ENCODE measurements at regions of chr20 and their contacts with region 1.

Region 1: DNA sequence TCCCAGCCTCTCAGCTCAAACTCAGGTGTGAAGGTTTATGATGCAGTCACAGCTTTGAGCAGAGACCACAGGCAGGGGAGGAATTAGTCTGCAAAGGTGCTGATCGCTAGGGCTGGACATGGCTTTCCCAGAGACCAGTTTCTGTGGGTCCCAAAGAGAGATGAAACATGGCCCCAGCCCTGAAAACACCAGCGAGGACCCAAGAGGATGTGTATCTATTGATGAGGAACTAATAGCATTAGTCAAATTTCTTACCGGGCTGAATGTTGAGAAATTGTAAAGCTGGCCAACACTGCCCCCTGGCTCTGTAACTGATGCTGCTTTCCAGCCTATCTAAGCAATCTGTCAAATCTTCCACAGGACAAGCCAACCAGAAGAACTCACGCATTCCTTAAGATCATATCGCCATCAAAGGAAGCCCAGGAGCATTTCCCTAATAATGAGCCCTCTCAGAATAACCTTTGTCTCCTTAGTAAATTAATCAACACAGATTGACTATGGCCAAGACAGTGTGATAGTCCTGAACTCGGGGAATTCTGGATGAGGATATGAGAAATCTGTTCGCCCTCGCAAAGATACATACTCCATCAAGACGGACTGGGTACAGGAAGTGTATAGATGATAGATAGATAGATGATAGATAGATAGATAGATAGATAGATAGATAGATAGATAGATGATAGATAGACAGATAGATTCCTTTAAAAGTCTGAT is 7.8 kb upstream of the ACSS1 start:
- DNase-seq: peak; percentile 38 to 86 (median 71)
- H3K4me3 ChIP-seq: no peak overlapping the region
- H3K27ac ChIP-seq: no peak overlapping the region
- H3K4me1 ChIP-seq: no peaks in the 10 kb centered on the region
- H3K27me3 ChIP-seq: peaks cover 9% of the 10 kb centered on the region
- CTCF ChIP-seq: peak; percentile 35 to 92 (median 84)
- POLR2A ChIP-seq: no peak

Region 2: DNA sequence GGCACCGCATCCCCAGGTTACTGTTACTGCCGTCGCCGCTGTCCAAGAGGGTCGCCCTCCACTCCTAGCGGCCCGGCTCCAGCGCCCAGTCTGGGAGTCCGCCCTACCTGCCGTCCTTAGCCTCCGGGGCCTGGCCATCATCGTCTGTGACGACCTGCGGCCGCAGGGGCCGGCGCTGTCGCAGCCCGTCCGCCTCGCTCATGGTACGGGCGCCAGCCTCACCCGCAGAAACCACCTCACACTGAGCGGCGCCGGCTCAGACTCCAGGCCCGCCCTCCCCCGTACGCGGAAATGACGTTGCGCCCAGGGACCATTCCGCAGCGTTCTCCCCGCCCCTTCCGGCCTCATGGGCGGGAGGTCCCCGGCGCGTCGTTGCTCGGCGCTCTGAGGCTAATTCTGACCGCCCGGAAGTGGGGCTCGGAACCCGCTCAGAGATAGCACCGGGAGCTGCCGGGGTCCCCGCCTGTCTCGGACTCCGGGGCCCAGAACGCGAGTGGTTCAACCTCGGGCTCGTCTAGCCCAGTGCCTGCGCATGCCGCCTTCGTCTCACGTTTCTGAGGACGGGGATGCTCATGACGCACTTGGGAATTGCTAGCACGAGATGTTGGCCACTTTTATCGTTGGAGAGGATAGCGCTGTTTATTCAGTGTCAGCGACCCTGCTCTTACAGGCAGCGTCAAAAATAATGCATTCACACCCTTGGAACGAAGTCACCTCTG is 73.1 kb before region 1 on chr20 and contains the start of gene APMAP:
- intact Hi-C with region 1: loop called (anchors 2 kb)
- DNase-seq: peak; percentile 94 to 97 (median 97)
- H3K4me3 ChIP-seq: peak within 1 kb of the TSS; percentile 52 to 91 (median 82)
- H3K27ac ChIP-seq: peak within 1 kb of the TSS; percentile 33 to 99 (median 88)
- H3K4me1 ChIP-seq: peaks cover 0 to 24% of the 10 kb centered on the region in 2 donors
- H3K27me3 ChIP-seq: no peaks in the 10 kb centered on the region
- CTCF ChIP-seq: peak in 1 of 6 experiments; percentile 1
- POLR2A ChIP-seq: peak; percentile 90 to 96
- total RNA-seq, gene APMAP: 45.8 to 110 (median 74.6) TPM

Measured in adrenal gland (tissue), 19 donors.